HepG2 (cell line): ENCODE measurements at regions of chr1 and their contacts with region 1.

Region 1: GRCh38 chr1:167687919-167688519 is 33.8 kb upstream of the MPZL1 start:
- DNase-seq: peak; percentile 61
- ATAC-seq: peak; percentile 73
- H3K4me3 ChIP-seq: no peak overlapping the region
- H3K27ac ChIP-seq: no peak overlapping the region
- H3K4me1 ChIP-seq: peaks cover 7% of the 10 kb centered on the region
- H3K27me3 ChIP-seq: peaks cover 0 to 22% of the 10 kb centered on the region in 2 experiments; a peak in 3 of 5 replicates
- CTCF ChIP-seq: peak; percentile 81
- EP300 ChIP-seq: no peak
- POLR2A ChIP-seq: no peak
- RAD21 ChIP-seq: peak; percentile 70; the same call in 1 of the 2 replicates

Region 2: DNA sequence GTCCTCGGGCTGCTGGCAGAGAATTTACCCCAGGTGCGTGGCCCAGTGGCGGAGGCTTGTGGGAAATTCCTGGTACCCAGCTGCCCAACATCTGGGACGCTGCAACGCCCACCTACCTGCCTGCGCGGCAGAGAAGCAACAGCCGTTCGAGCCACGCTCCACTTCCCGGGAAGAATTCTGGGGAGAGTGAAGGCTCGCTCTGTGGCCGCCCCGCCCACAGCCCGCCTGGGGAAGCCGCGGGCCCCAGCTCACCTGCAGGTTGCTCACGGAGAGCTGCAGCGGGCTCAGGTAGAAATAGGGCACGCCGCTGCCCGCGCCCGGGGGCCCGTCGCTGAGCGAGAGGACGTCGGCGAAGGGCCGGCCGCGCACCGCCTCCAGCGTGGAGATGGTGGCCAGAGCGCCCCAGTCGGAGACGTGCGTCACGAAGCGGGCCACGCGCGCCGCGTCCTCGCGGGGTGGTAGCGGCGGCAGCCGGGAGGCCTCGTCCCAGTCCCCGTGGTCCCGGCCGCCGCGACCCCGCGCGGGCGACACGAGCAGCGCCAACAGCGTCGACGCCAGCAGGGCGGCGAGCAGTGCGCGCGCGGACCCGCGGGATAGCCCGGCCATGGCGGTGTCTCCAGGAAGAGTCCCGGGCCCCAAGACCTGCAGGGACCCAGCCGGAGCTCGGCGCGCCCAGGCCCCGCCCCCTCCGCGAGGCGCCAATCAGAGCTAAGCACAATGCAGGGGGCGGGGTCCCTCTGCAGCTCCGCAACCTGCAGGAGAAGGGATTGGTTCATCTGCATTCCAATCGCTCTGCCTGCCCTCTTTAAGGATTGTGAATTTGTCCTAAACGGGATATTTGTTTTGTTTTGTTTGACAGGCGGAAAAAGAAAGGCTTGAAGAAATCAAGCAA is 134.6 kb before region 1 on chr1 and contains the start of gene CREG1:
- CTCF ChIA-PET with region 1: no interaction called
- POLR2A ChIA-PET with region 1: no interaction called
- in situ Hi-C with region 1: no loop called
- intact Hi-C with region 1: loop called (anchors 2 kb)
- DNase-seq: peak; percentile 88
- ATAC-seq: peak; percentile 100
- H3K4me3 ChIP-seq: peak within 1 kb of the TSS; percentile 57 to 72 (median 58)
- H3K27ac ChIP-seq: no peak within 1 kb of the TSS
- H3K4me1 ChIP-seq: peaks cover 7% of the 10 kb centered on the region
- H3K27me3 ChIP-seq: peaks cover 0 to 4% of the 10 kb centered on the region in 2 experiments; a peak in 1 of 5 replicates
- CTCF ChIP-seq: no peak
- EP300 ChIP-seq: no peak
- POLR2A ChIP-seq: peak; percentile 77 to 82
- RAD21 ChIP-seq: peak; percentile 57; the same call in 1 of the 2 replicates
- total RNA-seq, gene CREG1: 19.1 and 31.3 TPM in 2 replicates

Region 3: DNA sequence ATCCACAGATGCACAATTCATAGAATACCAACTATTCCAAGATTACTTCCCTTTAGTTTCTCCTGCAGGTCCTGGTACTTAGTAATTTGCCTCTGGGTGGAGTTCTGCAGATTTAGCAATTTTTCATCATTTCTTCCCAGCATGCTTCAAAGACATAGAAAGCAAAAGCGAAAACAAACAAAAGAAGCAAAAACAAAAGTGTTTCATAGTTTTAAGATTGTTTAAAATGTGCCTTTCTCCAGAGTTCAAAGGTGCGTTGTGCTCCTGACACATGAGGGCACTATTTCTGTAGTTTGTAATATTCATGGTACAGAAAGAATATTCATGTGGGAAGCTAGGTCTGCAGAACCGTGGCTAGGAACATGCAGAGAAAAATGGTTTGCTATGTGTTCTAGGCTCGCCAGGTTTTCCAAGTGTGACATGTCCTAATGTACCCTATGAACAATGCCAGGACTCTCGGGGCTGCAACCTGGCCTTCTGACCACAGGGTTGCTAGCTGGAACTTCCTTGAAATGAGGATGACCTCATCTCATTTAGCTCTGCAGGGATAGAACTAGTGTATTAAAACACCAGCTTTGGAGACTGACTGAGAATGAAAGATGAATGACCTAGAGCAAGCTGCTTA is 88.0 kb before region 1 on chr1:
- CTCF ChIA-PET with region 1: no interaction called
- POLR2A ChIA-PET with region 1: no interaction called
- in situ Hi-C with region 1: loop called (anchors 5 kb)
- intact Hi-C with region 1: loop called (anchors 1 kb)
- DNase-seq: peak; percentile 18
- ATAC-seq: peak; percentile 64
- H3K4me3 ChIP-seq: no peak overlapping the region
- H3K27ac ChIP-seq: no peak overlapping the region
- H3K4me1 ChIP-seq: peaks cover 19% of the 10 kb centered on the region
- H3K27me3 ChIP-seq: peaks cover 0 to 16% of the 10 kb centered on the region in 2 experiments; a peak in 2 of 5 replicates
- CTCF ChIP-seq: peak; percentile 61
- EP300 ChIP-seq: no peak
- POLR2A ChIP-seq: no peak
- RAD21 ChIP-seq: 0 out of 2 replicates have a peak, but pooled peaks have one; percentile 22

Region 4: GRCh38 chr1:167803358-167804207 is 115.6 kb after region 1 on chr1:
- CTCF ChIA-PET with region 1: no interaction called
- POLR2A ChIA-PET with region 1: no interaction called
- in situ Hi-C with region 1: no loop called
- intact Hi-C with region 1: loop called (anchors 1 kb)
- DNase-seq: peak; percentile 90
- ATAC-seq: peak; percentile 94
- H3K4me3 ChIP-seq: peak overlapping the region in 1 of 3 experiments; percentile 21; a peak in 1 of 6 replicates
- H3K27ac ChIP-seq: no peak overlapping the region
- H3K4me1 ChIP-seq: peaks cover 29% of the 10 kb centered on the region
- H3K27me3 ChIP-seq: no peaks in the 10 kb centered on the region
- CTCF ChIP-seq: peak; percentile 96
- EP300 ChIP-seq: no peak
- POLR2A ChIP-seq: no peak
- RAD21 ChIP-seq: peak; percentile 88